ENCODE measurements at regions of chr6 and their contacts with region 1.

Region 1: GRCh38 chr6:37018198-37019064 is 13.0 kb downstream of the FGD2 start:
- DNase-seq: peak; percentile 96
- H3K4me3 Mint-ChIP-seq: no peak overlapping the region
- H3K27ac Mint-ChIP-seq: peak overlapping the region; percentile 61
- H3K4me1 Mint-ChIP-seq: peaks cover 44% of the 10 kb centered on the region
- H3K27me3 Mint-ChIP-seq: no peaks in the 10 kb centered on the region

Region 2: DNA sequence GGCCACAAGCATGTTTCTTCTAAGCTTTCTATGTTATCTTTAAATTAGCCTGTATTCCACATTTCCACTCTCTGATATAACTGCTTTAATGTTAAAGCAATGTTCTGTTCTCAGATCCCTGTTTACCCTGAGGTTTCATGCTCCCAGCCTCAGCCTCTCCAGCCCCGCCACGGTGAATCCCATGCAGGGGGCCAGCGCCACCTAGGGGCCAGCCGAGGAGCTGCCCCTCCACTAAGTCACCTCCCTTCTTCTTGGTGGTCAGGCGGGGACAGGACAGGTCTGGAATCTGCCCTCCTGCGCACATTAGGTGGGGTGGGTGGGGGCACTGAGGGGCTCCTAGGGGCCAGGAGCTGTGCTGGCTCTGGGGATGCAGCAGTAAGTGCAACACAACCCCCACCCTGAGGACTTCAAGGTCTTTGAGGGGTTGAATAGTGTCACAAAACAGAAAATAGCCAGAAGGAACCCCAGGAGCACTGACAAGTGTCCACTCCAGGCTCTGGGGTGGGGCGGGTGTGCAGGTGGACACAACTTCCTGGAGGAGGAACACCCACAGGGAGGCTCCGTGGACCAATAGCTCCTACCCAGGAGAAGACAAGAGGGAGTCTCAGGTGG is 259.2 kb before region 1 on chr6:
- CTCF ChIA-PET with region 1: interaction called, 130 read pairs
- POLR2A ChIA-PET with region 1: no interaction called
- intact Hi-C with region 1: loop called (anchors 2 kb)
- DNase-seq: peak; percentile 89
- H3K4me3 Mint-ChIP-seq: no peak overlapping the region
- H3K27ac Mint-ChIP-seq: peak overlapping the region; percentile 11
- H3K4me1 Mint-ChIP-seq: peaks cover 40% of the 10 kb centered on the region
- H3K27me3 Mint-ChIP-seq: no peaks in the 10 kb centered on the region

Region 3: GRCh38 chr6:36874443-36875249 is 143.8 kb before region 1 on chr6 and contains the start of gene PPIL1:
- CTCF ChIA-PET with region 1: interaction called, 138 read pairs
- POLR2A ChIA-PET with region 1: no interaction called
- intact Hi-C with region 1: no loop called
- DNase-seq: peak; percentile 88
- H3K4me3 Mint-ChIP-seq: peak within 1 kb of the TSS; percentile 98
- H3K27ac Mint-ChIP-seq: peak within 1 kb of the TSS; percentile 99
- H3K4me1 Mint-ChIP-seq: peaks cover 40% of the 10 kb centered on the region
- H3K27me3 Mint-ChIP-seq: peaks cover 2% of the 10 kb centered on the region
- total RNA-seq, gene PPIL1: 38.5 to 40.6 TPM

Region 4: DNA sequence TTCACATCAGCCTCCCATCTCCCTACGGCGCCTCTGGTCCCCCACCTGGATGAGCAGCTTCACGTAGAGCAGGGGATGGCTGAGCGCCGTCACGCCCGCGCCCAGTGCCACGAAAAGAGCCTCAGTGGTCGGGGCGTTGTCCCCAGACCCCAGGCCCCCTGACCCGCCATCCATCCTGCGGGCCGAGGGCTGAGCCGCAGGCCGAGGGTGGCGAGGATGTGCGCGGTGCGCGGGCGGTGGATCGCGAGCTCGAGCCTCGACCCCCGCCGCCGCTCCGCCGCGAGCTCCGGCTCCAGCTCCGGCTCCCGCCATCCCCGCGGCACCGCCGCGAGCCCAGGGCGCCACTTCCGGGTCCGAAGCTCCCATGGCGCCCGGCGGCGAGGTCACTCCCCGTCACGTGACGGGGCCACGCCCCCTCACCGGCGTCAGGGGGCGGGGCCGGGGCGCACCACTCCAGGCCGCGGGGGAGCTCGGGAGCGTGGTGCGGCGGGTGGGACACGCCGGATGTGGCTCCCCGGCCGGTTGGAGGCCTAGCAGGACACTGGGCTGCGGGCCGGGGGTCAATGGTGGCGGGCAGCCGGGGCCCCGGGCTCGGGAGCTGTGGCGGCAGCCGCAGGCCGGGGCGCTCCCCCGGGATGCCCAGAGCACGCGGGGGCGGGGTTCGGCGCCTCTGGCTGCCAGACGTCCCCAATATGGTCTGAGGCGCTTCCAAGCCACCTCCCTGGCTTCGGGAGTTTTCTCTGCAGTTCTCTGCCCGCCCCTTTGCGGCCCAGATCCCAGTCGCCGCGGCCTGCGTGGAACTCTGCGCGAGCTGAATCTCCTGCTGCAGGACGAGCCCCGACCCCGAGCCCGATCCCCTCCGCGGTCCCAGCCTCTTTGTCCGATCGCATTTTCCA is 32.4 kb before region 1 on chr6 and contains the start of gene MTCH1:
- CTCF ChIA-PET with region 1: interaction called, 28 read pairs
- POLR2A ChIA-PET with region 1: interaction called, 5 read pairs
- intact Hi-C with region 1: loop called (anchors 1 kb)
- DNase-seq: peak; percentile 90
- H3K4me3 Mint-ChIP-seq: peak within 1 kb of the TSS; percentile 99
- H3K27ac Mint-ChIP-seq: peak within 1 kb of the TSS; percentile 90
- H3K4me1 Mint-ChIP-seq: peaks cover 18% of the 10 kb centered on the region
- H3K27me3 Mint-ChIP-seq: no peaks in the 10 kb centered on the region
- total RNA-seq, gene MTCH1: 109 to 114 TPM

Region 5: GRCh38 chr6:37059344-37060206 is 41.1 kb after region 1 on chr6:
- CTCF ChIA-PET with region 1: interaction called, 12 read pairs
- POLR2A ChIA-PET with region 1: no interaction called
- intact Hi-C with region 1: no loop called
- DNase-seq: peak; percentile 43
- H3K4me3 Mint-ChIP-seq: no peak overlapping the region
- H3K27ac Mint-ChIP-seq: no peak overlapping the region
- H3K4me1 Mint-ChIP-seq: peaks cover 3% of the 10 kb centered on the region
- H3K27me3 Mint-ChIP-seq: no peaks in the 10 kb centered on the region

Region 6: DNA sequence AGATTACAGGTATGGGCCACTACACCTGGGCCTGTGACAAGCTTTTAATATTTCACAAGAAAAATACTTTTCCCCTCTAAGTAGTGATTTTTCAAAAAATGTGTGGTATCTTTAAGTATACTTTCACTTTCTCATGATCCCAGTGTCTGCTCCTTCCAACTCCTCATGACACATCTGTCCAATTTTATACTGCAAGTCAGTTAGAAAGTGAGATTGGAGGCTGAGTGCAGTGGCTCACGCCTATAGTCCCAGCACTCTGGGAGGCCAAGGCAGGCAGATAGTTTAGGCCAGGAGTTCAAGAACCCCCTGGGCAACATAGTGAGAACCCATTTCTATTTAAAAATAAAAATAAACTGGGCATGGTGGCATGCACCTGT is 171.7 kb after region 1 on chr6:
- CTCF ChIA-PET with region 1: interaction called, 40 read pairs
- POLR2A ChIA-PET with region 1: no interaction called
- intact Hi-C with region 1: no loop called
- DNase-seq: peak; percentile 58
- H3K4me3 Mint-ChIP-seq: no peak overlapping the region
- H3K27ac Mint-ChIP-seq: peak overlapping the region; percentile 72
- H3K4me1 Mint-ChIP-seq: peaks cover 67% of the 10 kb centered on the region
- H3K27me3 Mint-ChIP-seq: no peaks in the 10 kb centered on the region

Measured in activated CD4-positive, alpha-beta memory T cell treated with anti-CD3 and anti-CD28 coated beads for 36 hours (primary cell).